ENCODE measurements at regions of chr2 and their contacts with region 1.

Region 1: DNA sequence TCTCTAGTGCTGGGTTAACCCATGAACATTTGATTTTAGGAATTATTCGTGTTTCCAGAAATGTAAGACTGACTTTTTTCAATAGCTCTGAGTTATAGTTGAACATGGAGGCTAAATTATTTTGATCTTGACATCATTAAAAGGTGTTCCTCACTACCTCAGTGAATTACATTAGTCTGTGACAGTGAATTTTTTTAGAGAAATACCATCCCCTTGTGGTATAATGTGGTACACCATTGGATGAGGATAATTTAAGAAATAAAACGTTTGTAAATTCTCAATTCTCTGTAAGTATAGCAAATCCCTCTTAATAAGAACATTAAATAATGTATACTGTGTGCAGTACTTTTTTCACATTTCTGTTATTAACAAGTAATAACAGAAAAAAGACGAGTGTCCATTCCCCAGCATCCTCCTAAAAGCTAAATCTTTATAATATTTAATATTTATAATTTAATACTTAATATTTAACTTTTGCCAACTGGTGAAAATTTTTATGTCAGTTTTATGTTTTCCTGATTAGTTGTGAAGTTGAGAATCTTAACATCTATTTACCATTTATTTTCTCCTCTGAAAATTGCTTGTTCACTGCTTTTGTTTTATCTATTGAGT is 70.3 kb upstream of the CWC22 start:
- DNase-seq: no peak
- H3K4me3 Mint-ChIP-seq: no peak overlapping the region
- H3K27ac Mint-ChIP-seq: no peak overlapping the region
- H3K4me1 Mint-ChIP-seq: no peaks in the 10 kb centered on the region
- H3K27me3 Mint-ChIP-seq: peaks cover 3% of the 10 kb centered on the region

Region 2: GRCh38 chr2:179842498-179843153 is 234.8 kb before region 1 on chr2:
- intact Hi-C with region 1: loop called (anchors 10 kb)
- DNase-seq: no peak
- H3K4me3 Mint-ChIP-seq: no peak overlapping the region
- H3K27ac Mint-ChIP-seq: no peak overlapping the region
- H3K4me1 Mint-ChIP-seq: no peaks in the 10 kb centered on the region
- H3K27me3 Mint-ChIP-seq: peaks cover 6% of the 10 kb centered on the region

Region 3: DNA sequence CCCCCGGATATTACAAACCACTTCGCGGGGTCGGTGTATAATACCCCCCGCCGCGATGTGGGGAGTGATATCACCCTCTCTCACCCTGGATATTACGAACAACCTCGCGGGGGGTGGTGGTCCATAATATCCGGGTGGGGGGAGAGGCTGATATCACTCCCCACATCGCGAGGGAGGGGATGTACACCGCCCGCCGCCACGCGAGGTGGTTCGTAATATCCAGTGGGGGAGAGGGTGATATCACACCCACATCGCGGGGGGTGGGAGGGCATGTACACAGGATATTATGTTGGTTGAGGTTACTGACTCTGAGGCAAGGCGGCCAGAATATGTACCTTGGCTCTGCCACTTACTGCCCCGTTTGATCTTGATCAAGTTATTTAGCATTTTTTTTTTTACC is 55.6 kb before region 1 on chr2:
- intact Hi-C with region 1: no loop called
- DNase-seq: no peak
- H3K4me3 Mint-ChIP-seq: no peak overlapping the region
- H3K27ac Mint-ChIP-seq: no peak overlapping the region
- H3K4me1 Mint-ChIP-seq: no peaks in the 10 kb centered on the region
- H3K27me3 Mint-ChIP-seq: peaks cover 6% of the 10 kb centered on the region

Region 4: GRCh38 chr2:180240774-180241173 is 163.4 kb after region 1 on chr2:
- intact Hi-C with region 1: no loop called
- DNase-seq: no peak
- H3K4me3 Mint-ChIP-seq: no peak overlapping the region
- H3K27ac Mint-ChIP-seq: no peak overlapping the region
- H3K4me1 Mint-ChIP-seq: no peaks in the 10 kb centered on the region
- H3K27me3 Mint-ChIP-seq: no peaks in the 10 kb centered on the region